Activated CD4-positive, alpha-beta T cell treated with anti-CD3 and anti-CD28 coated beads, Interleukin-2, amount 10 ng/mL, durations not matched to agents 7 days and 5 days (primary cell): ENCODE measurements at regions of chr15 and their contacts with region 1.

Region 1: GRCh38 chr15:63065262-63066221 is 23.0 kb downstream of the TPM1 start:
- DNase-seq: no peak
- H3K4me3 Mint-ChIP-seq: no peak overlapping the region
- H3K27ac Mint-ChIP-seq: no peak overlapping the region
- H3K4me1 Mint-ChIP-seq: no peaks in the 10 kb centered on the region
- H3K27me3 Mint-ChIP-seq: no peaks in the 10 kb centered on the region

Region 2: GRCh38 chr15:63079938-63080626 is 14.5 kb after region 1 on chr15:
- CTCF ChIA-PET with region 1: interaction called, 10 read pairs
- POLR2A ChIA-PET with region 1: no interaction called
- DNase-seq: no peak
- H3K4me3 Mint-ChIP-seq: no peak overlapping the region
- H3K27ac Mint-ChIP-seq: no peak overlapping the region
- H3K4me1 Mint-ChIP-seq: peaks cover 10% of the 10 kb centered on the region
- H3K27me3 Mint-ChIP-seq: peaks cover 8% of the 10 kb centered on the region

Region 3: GRCh38 chr15:63188926-63189871 is 123.7 kb after region 1 on chr15 and contains the start of gene RAB8B:
- CTCF ChIA-PET with region 1: no interaction called
- POLR2A ChIA-PET with region 1: no interaction called
- DNase-seq: peak; percentile 98
- H3K4me3 Mint-ChIP-seq: peak within 1 kb of the TSS; percentile 96
- H3K27ac Mint-ChIP-seq: peak within 1 kb of the TSS; percentile 89
- H3K4me1 Mint-ChIP-seq: peaks cover 45% of the 10 kb centered on the region
- H3K27me3 Mint-ChIP-seq: peaks cover 4% of the 10 kb centered on the region
- total RNA-seq, gene RAB8B: 115 to 150 TPM